Activated naive CD4-positive, alpha-beta T cell treated with anti-CD3 and anti-CD28 coated beads for 36 hours (primary cell): ENCODE measurements at regions of chr11 and their contacts with region 1.

Region 1: DNA sequence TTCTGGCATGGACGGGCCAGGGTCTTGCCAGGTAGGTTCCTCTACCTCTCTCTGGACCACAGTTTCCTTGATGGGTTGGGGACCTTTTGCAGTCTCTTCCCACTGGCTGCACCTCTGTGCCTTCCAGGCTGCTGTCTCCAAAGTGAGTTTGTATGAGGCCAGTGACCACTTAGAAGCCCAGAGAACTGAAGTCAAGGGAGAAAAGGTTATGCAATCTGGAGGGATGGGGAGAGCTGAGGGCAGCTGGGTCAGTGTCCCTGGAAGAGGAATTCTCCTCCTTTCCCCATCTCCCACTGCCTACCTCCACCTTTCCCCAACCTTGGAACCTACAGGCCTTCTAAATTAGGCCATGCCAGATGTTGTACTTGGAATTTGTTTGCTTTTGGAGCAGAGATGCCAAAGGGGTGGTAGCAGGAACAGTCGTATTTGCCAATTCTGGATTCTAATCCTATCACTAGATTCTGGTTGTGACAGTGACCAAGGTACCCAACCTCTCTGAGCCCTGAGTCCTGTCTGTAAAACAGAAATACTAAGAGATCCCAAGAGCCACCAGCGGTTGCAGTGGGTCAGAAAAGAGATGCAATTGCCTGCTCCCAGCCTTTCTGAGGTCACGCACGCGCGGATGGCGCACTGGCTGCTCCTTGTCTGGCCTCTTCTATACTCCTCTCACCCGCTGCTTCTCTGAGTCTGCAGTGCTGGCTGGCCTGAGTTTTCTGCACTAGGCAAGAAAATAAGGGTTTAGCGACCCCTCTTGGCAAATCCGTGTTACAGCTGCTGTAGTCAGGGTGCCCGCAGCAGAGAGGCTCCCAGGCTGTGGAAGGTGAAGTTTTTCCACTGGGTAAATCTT is 10.7 kb upstream of the ACCSL start:
- DNase-seq: peak; percentile 60
- H3K4me3 Mint-ChIP-seq: no peak overlapping the region
- H3K27ac Mint-ChIP-seq: no peak overlapping the region
- H3K4me1 Mint-ChIP-seq: no peaks in the 10 kb centered on the region
- H3K27me3 Mint-ChIP-seq: peaks cover 8% of the 10 kb centered on the region

Region 2: GRCh38 chr11:43825217-43825816 is 211.7 kb before region 1 on chr11:
- CTCF ChIA-PET with region 1: no interaction called
- intact Hi-C with region 1: loop called (anchors 5 kb)
- DNase-seq: peak; percentile 27
- H3K4me3 Mint-ChIP-seq: no peak overlapping the region
- H3K27ac Mint-ChIP-seq: no peak overlapping the region
- H3K4me1 Mint-ChIP-seq: peaks cover 2% of the 10 kb centered on the region
- H3K27me3 Mint-ChIP-seq: no peaks in the 10 kb centered on the region

Region 3: GRCh38 chr11:43895601-43896000 is 141.4 kb before region 1 on chr11:
- CTCF ChIA-PET with region 1: no interaction called
- intact Hi-C with region 1: loop called (anchors 1 kb)
- DNase-seq: no peak
- H3K4me3 Mint-ChIP-seq: no peak overlapping the region
- H3K27ac Mint-ChIP-seq: no peak overlapping the region
- H3K4me1 Mint-ChIP-seq: no peaks in the 10 kb centered on the region
- H3K27me3 Mint-ChIP-seq: no peaks in the 10 kb centered on the region